ENCODE measurements at regions of chr6 and their contacts with region 1.

Region 1: GRCh38 chr6:52361945-52362442 is at the start of gene PAQR8:
- DNase-seq: no peak
- ATAC-seq: peak; percentile 90
- H3K4me3 ChIP-seq: peak within 1 kb of the TSS; percentile 94
- H3K27ac ChIP-seq: peak within 1 kb of the TSS; percentile 80
- H3K4me1 ChIP-seq: peaks cover 20% of the 10 kb centered on the region
- H3K27me3 ChIP-seq: no peaks in the 10 kb centered on the region
- CTCF ChIP-seq: no peak
- EP300 ChIP-seq: no peak
- POLR2A ChIP-seq: peak; percentile 78
- RAD21 ChIP-seq: no peak
- polyA plus RNA-seq, gene PAQR8: 3.9 to 4.7 TPM

Region 2: DNA sequence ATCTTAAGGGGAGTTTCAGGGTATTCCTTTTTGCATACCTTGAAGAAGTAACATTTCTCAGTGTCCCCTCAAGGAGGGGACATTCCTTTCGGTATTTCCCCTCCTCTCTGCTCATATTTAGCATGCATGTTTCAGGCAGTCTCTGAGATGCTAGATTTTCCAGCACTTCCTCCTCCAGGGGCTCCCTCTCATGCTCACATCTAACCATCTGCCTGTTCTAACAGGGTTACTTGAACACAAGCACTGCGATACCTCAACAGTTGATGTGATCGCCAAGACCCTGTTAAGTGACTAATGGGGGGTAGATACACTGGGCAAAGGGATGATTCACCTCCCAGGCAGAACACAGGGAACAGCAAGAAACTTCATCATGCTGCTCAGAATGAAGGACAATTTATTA is 64.6 kb before region 1 on chr6:
- CTCF ChIA-PET with region 1: interaction called, 4 read pairs
- POLR2A ChIA-PET with region 1: interaction called, 9 read pairs
- RAD21 ChIA-PET with region 1: interaction called, 14 read pairs
- SMC1A ChIA-PET with region 1: interaction called, 6 read pairs
- in situ Hi-C with region 1: no loop called
- intact Hi-C with region 1: loop called (anchors 2 kb)
- DNase-seq: no peak
- ATAC-seq: peak; percentile 70
- H3K4me3 ChIP-seq: peak overlapping the region; percentile 19; the same call in 1 of the 2 replicates
- H3K27ac ChIP-seq: peak overlapping the region; percentile 86
- H3K4me1 ChIP-seq: peaks cover 51% of the 10 kb centered on the region
- H3K27me3 ChIP-seq: no peaks in the 10 kb centered on the region
- CTCF ChIP-seq: 0 out of 6 replicates have a peak, but pooled peaks of 1 of the 3 experiments have one; percentile 9
- EP300 ChIP-seq: no peak
- POLR2A ChIP-seq: no peak
- RAD21 ChIP-seq: peak; percentile 32; the same call in 1 of the 2 replicates

Region 3: DNA sequence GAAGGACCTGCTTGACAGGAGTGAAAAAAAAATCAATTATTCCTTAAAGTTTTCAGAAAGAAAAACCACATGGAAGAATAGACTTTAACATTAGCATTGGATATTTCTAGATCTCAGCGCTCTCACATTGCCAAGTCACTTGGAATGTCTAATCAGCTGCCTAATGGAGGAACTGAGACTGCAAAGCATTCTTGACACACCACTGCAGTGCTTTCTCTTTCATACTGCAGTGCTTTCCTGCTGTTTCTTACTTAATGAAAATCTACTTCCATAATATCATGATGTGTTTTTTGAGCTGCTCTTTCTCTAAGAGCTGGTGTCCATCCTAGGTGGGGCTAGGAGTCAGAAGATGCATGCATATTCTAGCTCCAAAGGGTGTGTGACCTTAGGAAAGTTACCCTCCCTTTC is 57.0 kb before region 1 on chr6:
- CTCF ChIA-PET with region 1: interaction called, 8 read pairs
- POLR2A ChIA-PET with region 1: interaction called, 11 read pairs
- RAD21 ChIA-PET with region 1: interaction called, 17 read pairs
- SMC1A ChIA-PET with region 1: interaction called, 39 read pairs
- in situ Hi-C with region 1: no loop called
- intact Hi-C with region 1: no loop called
- DNase-seq: no peak
- ATAC-seq: peak; percentile 74
- H3K4me3 ChIP-seq: peak overlapping the region; percentile 25; the same call in 1 of the 2 replicates
- H3K27ac ChIP-seq: peak overlapping the region; percentile 89
- H3K4me1 ChIP-seq: peaks cover 49% of the 10 kb centered on the region
- H3K27me3 ChIP-seq: no peaks in the 10 kb centered on the region
- CTCF ChIP-seq: no peak
- EP300 ChIP-seq: peak in 1 of 2 experiments; percentile 46; a peak in 2 of 4 replicates
- POLR2A ChIP-seq: no peak
- RAD21 ChIP-seq: 0 out of 2 replicates have a peak, but pooled peaks have one; percentile 1

Region 4: DNA sequence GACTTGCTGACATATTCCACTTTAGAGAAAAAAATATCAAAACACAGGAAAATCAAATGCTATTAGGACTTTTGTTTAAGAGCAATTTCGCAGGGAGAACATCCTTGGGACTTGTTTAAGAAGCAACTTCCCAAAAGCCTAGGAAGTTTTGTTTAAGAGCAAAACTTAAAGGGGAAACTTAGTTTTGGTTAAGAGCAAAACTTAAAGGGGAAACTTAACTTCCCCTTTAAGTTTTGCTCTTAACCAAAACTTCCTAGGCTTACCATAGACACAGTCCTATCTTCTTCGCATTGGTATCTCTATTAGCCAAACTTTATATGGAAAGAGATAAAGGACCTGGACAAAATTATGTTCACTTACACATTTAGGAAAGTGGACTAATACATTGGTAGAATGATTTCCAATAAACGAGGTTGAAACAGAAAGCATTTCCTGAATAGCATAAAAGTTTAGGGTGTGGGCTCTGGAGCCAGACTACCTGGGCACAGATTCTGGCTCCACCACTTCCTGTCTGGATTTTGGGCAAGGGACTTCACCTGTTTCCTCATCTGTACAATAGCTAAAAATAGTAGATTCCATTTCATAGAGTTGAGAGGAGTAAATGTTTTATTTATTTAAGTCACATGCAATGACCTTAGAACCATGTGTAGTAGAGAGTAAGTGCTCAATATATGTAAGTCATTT is 15.7 kb after region 1 on chr6:
- CTCF ChIA-PET with region 1: interaction called, 21 read pairs
- POLR2A ChIA-PET with region 1: interaction called, 7 read pairs
- RAD21 ChIA-PET with region 1: interaction called, 11 read pairs
- SMC1A ChIA-PET with region 1: interaction called, 68 read pairs
- in situ Hi-C with region 1: no loop called
- intact Hi-C with region 1: no loop called
- DNase-seq: no peak
- ATAC-seq: peak; percentile 67
- H3K4me3 ChIP-seq: peak overlapping the region; percentile 3; the same call in 1 of the 2 replicates
- H3K27ac ChIP-seq: peak overlapping the region; percentile 24; the same call in 1 of the 2 replicates
- H3K4me1 ChIP-seq: peaks cover 26% of the 10 kb centered on the region
- H3K27me3 ChIP-seq: no peaks in the 10 kb centered on the region
- CTCF ChIP-seq: no peak
- EP300 ChIP-seq: no peak
- POLR2A ChIP-seq: no peak
- RAD21 ChIP-seq: no peak